ENCODE measurements at regions of chr7 and their contacts with region 1.

Region 1: DNA sequence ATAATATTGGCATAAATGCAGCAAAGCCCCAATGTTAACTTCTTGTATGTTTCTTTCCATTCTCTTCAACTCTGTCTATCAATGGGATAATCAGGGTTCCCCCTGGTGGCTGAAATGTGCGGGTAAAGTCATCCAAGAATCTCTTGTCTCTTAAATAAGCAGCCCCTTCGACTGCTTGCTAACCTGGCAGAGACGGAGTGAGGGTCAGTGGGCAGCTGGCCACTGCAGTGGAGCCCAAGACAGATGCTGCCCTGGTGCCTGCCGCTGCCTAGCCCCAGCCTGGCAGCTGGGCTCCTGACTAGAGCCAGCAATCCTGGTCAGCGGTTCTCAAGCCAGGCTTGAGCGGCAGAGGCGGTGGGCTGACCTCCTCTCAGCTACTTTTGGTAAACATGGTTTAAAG is 248.9 kb downstream of the COBL start:
- DNase-seq: peak in 1 of 2 donors; percentile 68
- ATAC-seq: peak; percentile 59

Region 2: GRCh38 chr7:50142425-50143017 is 925.2 kb before region 1 on chr7:
- intact Hi-C with region 1: loop called in 1 of 2 experiments (anchors 5 kb)
- DNase-seq: no peak
- ATAC-seq: no peak

Region 3: GRCh38 chr7:50475340-50475739 is 592.4 kb before region 1 on chr7:
- intact Hi-C with region 1: loop called in 1 of 2 experiments (anchors 10 kb)
- DNase-seq: no peak
- ATAC-seq: no peak

Region 4: GRCh38 chr7:50679218-50680007 is 388.3 kb before region 1 on chr7:
- intact Hi-C with region 1: loop called in 1 of 2 experiments (anchors 5 kb)
- DNase-seq: no peak
- ATAC-seq: peak; percentile 60

Measured in left colon (tissue), 2 donors.